Mammary epithelial cell (primary cell): ENCODE measurements at regions of chr1 and their contacts with region 1.

Region 1: GRCh38 chr1:46527474-46528296 is 23.8 kb downstream of the KNCN start:
- DNase-seq: peak; percentile 52
- H3K4me3 ChIP-seq: no peak overlapping the region
- H3K27ac ChIP-seq: no peak overlapping the region
- H3K4me1 ChIP-seq: peaks cover 16% of the 10 kb centered on the region
- H3K27me3 ChIP-seq: no peaks in the 10 kb centered on the region
- CTCF ChIP-seq: peak; percentile 97

Region 2: DNA sequence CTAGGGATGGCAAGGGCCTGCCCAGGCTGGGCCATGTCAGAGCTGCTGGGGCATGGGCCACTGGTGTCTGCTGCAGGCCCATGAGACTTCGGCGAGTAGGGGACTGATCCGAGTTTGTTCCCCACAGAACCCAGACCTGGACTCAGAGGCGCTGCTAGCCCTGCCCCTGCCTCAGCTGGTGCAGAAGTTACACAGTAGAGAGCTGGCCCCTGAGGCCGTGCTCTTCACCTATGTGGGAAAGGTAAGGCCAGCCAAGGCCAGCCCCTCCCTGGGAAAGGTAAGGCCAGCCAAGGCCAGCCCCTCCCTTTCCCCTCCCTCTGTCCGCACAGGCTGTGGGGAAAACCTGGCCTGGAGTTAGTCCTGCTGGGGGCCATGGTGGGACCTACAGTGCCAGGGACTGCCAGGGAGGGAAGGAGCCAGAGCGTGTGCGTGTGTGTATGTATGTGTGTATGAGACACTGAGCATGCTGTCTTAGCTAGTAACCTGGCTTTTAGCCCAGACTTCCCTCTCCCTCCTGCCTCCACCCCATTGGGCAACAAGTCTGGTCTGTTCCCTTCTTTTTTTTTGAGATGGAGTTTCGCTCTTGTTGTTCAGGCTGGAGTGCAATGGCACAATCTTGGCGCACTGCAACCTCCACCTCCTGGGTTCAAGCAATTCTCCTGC is 125.6 kb before region 1 on chr1:
- CTCF ChIA-PET with region 1: no interaction called
- dilution Hi-C with region 1: no loop called
- in situ Hi-C with region 1: no loop called
- intact Hi-C with region 1: loop called (anchors 1 kb)
- DNase-seq: peak; percentile 95
- H3K4me3 ChIP-seq: no peak overlapping the region
- H3K27ac ChIP-seq: no peak overlapping the region
- H3K4me1 ChIP-seq: peaks cover 15% of the 10 kb centered on the region
- H3K27me3 ChIP-seq: no peaks in the 10 kb centered on the region
- CTCF ChIP-seq: no peak

Region 3: DNA sequence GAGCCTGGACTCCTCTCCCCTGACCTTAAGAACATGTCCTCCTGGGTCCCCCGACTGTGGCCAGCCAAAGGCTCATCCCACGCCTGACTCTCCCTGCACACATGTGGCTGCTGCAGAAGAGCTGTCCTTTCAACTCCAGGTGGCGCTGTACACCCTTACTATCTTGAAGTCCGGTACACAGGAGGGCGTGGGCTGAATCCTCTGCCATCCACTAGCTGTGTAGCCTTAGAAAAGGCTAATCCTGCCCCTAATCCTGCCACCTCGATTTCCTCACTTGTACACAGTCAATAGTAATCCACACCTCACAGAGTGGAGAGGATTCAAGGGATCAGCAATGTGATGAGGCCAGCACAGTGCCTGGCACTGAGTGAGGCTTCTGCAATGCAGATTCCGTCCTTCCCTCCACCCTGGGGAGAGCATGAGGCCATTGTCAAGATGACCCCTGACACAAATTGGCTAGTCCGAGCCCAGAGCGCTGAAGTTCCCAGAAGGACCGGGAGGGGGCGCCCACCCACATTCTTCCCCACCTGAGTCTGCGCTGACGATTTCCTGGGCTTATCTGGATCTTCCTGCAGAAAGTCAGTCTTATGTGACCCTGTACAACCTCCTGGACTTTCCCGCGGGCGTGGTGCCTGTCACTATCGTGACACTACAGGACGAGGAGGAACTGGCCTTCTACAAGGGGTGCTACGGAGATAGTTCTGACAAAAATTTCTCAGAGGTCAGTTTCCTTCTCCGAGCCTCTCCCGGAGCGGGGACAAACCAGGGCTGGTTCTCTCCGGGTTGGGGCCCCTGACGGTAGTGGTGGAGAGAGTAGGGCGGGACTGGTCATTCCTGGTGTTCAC is 85.1 kb before region 1 on chr1:
- CTCF ChIA-PET with region 1: interaction called, 9 read pairs
- dilution Hi-C with region 1: no loop called
- in situ Hi-C with region 1: loop called in 1 of 2 experiments (anchors 10 kb)
- intact Hi-C with region 1: loop called (anchors 1 kb)
- DNase-seq: peak; percentile 71
- H3K4me3 ChIP-seq: peak overlapping the region; percentile 20 to 36 (median 34)
- H3K27ac ChIP-seq: no peak overlapping the region
- H3K4me1 ChIP-seq: no peaks in the 10 kb centered on the region
- H3K27me3 ChIP-seq: peaks cover under 1% of the 10 kb centered on the region
- CTCF ChIP-seq: peak; percentile 78 to 80

Region 4: GRCh38 chr1:46456411-46456963 is 71.2 kb before region 1 on chr1:
- CTCF ChIA-PET with region 1: no interaction called
- dilution Hi-C with region 1: no loop called
- in situ Hi-C with region 1: no loop called
- intact Hi-C with region 1: no loop called
- DNase-seq: no peak
- H3K4me3 ChIP-seq: no peak overlapping the region
- H3K27ac ChIP-seq: no peak overlapping the region
- H3K4me1 ChIP-seq: peaks cover 1% of the 10 kb centered on the region
- H3K27me3 ChIP-seq: peaks cover 6% of the 10 kb centered on the region
- CTCF ChIP-seq: no peak

Region 5: DNA sequence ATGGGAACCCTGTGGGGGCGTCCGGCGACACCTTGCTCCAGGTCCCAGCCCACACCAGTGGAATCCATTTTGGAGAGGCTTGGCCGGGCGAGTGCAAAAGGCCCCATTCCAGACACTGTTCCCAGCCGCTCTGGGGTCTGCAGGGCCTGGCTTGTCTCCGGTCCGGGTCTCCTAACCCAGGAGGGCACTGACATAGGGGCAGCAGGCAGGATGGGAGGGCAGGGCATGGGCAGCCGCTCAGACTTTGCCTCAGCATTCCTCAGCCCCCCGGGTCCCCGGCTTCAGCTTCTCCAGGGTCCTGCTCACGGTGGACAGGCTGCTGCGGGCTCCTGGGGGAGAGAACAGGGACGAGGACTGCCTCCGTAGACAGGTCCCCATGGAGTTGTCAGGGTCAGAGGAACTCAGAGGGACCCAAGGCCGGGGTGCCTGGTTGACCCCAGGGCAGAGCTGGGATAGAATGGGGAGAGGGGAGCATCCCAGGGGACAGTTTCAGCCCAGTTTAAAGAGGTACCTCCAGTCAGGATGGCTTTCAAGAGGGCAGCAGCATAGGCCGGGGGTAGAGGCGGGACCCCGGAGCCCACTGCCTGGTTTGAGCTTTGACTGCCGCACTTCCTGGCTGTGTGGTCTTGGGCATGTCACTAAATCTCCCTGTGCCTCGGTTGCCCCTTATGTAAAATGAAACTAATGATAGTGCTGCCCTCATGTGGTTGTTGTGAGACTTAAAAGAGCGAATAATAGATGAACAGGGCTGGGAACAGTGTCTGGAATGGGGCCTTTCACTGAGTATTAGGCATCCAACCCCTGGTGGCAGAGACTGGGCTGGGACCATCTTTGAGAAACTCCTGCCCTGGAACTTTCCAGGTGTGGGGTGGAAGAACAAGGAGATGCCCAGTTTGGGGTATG is 20.0 kb after region 1 on chr1:
- CTCF ChIA-PET with region 1: no interaction called
- dilution Hi-C with region 1: no loop called
- in situ Hi-C with region 1: no loop called
- intact Hi-C with region 1: loop called (anchors 2 kb)
- DNase-seq: peak; percentile 35
- H3K4me3 ChIP-seq: no peak overlapping the region
- H3K27ac ChIP-seq: no peak overlapping the region
- H3K4me1 ChIP-seq: no peaks in the 10 kb centered on the region
- H3K27me3 ChIP-seq: peaks cover 20% of the 10 kb centered on the region
- CTCF ChIP-seq: peak; percentile 53 to 55

Region 6: DNA sequence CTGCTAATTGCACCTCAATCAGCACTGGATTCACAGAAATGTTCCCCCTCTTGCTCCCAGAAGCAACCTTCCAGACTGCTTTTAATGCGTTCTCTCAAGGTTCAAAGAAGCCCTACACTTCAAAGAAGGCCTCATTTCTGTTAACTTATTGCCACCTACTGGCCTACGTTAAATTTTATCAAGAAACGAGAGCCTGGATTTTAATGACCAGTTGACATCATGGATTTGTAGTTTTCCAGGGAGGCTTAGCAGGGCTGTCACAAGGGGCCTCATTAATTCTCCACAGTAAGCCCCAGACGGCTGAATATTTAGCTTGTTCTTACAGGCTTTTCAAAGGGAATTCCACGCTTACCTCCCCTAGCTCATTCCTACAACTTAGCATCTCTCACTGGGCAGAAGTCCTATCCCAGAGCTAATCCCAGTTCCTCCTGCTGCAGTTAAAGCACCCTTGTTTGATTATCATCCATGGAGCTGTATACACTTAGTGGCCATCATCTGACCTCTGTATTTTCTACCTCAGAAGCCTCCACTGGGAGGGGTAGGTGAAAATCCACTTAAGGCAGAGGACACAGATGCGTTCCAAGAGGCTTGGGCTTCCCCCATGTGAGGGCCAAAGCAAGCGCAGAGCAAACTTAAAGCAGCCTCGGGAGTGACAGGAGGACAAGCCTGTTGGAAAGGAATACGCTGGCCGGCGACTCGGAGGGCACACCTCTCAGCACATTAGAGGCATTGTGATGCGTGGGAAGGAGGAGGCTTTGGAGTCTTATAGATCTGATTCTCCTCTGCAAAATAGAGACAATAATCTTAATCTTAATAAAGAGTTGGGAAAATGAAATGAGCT is 463.6 kb after region 1 on chr1:
- CTCF ChIA-PET with region 1: no interaction called
- dilution Hi-C with region 1: no loop called
- in situ Hi-C with region 1: no loop called
- intact Hi-C with region 1: loop called (anchors 10 kb)
- DNase-seq: no peak
- H3K4me3 ChIP-seq: no peak overlapping the region
- H3K27ac ChIP-seq: no peak overlapping the region
- H3K4me1 ChIP-seq: no peaks in the 10 kb centered on the region
- H3K27me3 ChIP-seq: peaks cover 5% of the 10 kb centered on the region
- CTCF ChIP-seq: peak in 1 of 2 donors; percentile 54